GM10248 (cell line): ENCODE measurements at regions of chr11 and their contacts with region 1.

Region 1: GRCh38 chr11:13335319-13335718 is 57.7 kb downstream of the BMAL1 start:
- DNase-seq: peak; percentile 70
- CTCF ChIP-seq: peak; percentile 84

Region 2: GRCh38 chr11:13135385-13136271 is 199.7 kb before region 1 on chr11:
- CTCF ChIA-PET with region 1: no interaction called
- POLR2A ChIA-PET with region 1: no interaction called
- DNase-seq: no peak
- CTCF ChIP-seq: no peak

Region 3: GRCh38 chr11:13249996-13250395 is 85.3 kb before region 1 on chr11:
- CTCF ChIA-PET with region 1: interaction called, 40 read pairs
- POLR2A ChIA-PET with region 1: no interaction called
- DNase-seq: no peak
- CTCF ChIP-seq: peak; percentile 29

Region 4: GRCh38 chr11:13277768-13278613 is 57.3 kb before region 1 on chr11 and contains the start of gene BMAL1:
- CTCF ChIA-PET with region 1: interaction called, 12 read pairs
- POLR2A ChIA-PET with region 1: no interaction called
- DNase-seq: peak; percentile 58
- CTCF ChIP-seq: no peak

Region 5: GRCh38 chr11:13303668-13304649 is 31.4 kb before region 1 on chr11:
- CTCF ChIA-PET with region 1: interaction called, 13 read pairs
- POLR2A ChIA-PET with region 1: no interaction called
- DNase-seq: no peak
- CTCF ChIP-seq: no peak

Region 6: DNA sequence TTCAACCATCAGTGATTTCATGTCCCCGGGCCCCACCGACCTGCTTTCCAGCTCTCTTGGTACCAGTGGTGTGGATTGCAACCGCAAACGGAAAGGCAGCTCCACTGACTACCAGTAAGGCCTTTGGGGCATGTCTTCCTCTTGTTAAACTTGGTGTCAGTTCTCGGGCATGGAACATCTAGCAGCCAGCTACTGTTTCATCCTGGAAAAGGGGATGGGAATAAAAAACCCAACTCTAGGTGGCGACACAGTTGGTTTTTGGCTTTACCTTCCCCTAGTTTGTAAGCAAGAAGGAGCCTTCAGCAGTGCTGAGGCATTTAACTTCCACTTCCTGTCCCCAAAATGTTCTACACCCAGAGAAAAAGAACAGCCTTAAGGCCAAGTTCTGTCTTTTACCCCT is 19.0 kb after region 1 on chr11:
- CTCF ChIA-PET with region 1: interaction called, 38 read pairs
- POLR2A ChIA-PET with region 1: no interaction called
- DNase-seq: no peak
- CTCF ChIP-seq: peak; percentile 1

Region 7: GRCh38 chr11:13472001-13472400 is 136.7 kb after region 1 on chr11:
- CTCF ChIA-PET with region 1: no interaction called
- POLR2A ChIA-PET with region 1: no interaction called
- DNase-seq: no peak
- CTCF ChIP-seq: no peak

Region 8: GRCh38 chr11:14041040-14041439 is 705.7 kb after region 1 on chr11:
- CTCF ChIA-PET with region 1: no interaction called
- POLR2A ChIA-PET with region 1: no interaction called
- DNase-seq: no peak
- CTCF ChIP-seq: no peak